Panc1 (cell line): ENCODE measurements at regions of chrX and their contacts with region 1.

Region 1: DNA sequence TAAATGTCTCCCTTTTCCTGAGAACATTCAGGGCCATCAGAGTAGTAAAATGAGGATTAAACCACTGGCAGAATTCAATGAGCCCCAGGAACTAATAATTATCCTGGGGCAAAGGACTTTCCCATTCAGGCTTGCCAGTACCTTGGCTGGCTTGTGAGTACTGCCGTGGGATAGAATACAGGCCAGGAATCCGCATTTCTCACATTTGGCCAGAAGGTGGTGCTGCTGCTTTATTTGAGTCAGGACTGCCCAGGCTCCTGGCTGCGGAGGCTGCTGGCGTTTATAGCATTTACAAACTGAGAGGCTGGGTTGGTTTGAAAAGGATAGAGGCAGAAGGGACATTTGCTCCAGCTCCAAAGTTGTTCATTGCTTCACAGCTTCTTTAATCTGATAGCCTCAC is 91.4 kb downstream of the RTL9 start:
- DNase-seq: peak; percentile 45
- ATAC-seq: peak; percentile 95
- H3K4me3 ChIP-seq: no peak overlapping the region
- H3K27ac ChIP-seq: no peak overlapping the region
- H3K4me1 ChIP-seq: no peaks in the 10 kb centered on the region
- H3K27me3 ChIP-seq: peaks cover 12% of the 10 kb centered on the region
- CTCF ChIP-seq: peak; percentile 81

Region 2: GRCh38 chrX:110241816-110242215 is 208.2 kb before region 1 on chrX:
- CTCF ChIA-PET with region 1: no interaction called
- POLR2A ChIA-PET with region 1: no interaction called
- in situ Hi-C with region 1: no loop called
- intact Hi-C with region 1: no loop called
- DNase-seq: no peak
- ATAC-seq: no peak
- H3K4me3 ChIP-seq: no peak overlapping the region
- H3K27ac ChIP-seq: no peak overlapping the region
- H3K4me1 ChIP-seq: peaks cover 6% of the 10 kb centered on the region
- H3K27me3 ChIP-seq: no peaks in the 10 kb centered on the region
- CTCF ChIP-seq: no peak

Region 3: GRCh38 chrX:110665223-110666002 is 215.4 kb after region 1 on chrX:
- CTCF ChIA-PET with region 1: no interaction called
- POLR2A ChIA-PET with region 1: no interaction called
- in situ Hi-C with region 1: no loop called
- intact Hi-C with region 1: loop called (anchors 5 kb)
- DNase-seq: no peak
- ATAC-seq: peak; percentile 80; the same call in 1 of the 2 replicates
- H3K4me3 ChIP-seq: no peak overlapping the region
- H3K27ac ChIP-seq: no peak overlapping the region
- H3K4me1 ChIP-seq: no peaks in the 10 kb centered on the region
- H3K27me3 ChIP-seq: no peaks in the 10 kb centered on the region
- CTCF ChIP-seq: peak; percentile 64

Region 4: DNA sequence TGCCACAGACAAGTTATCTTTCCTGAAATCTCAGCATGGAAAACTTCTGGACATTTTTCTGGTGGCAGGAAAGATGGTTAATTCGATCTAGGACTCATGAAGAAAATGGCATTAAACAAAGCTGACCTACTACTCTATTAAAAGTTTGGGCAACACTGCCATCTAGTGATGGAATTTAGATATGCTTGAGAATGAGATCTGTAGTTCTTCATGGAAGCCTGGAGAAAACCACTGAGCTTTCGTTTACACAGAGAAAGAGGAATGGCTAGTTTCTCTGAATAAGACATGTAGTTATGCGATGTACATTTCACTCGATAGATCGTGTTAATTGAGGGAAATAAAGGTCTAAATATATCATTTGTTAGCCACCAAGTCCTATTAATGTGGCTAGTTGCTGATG is 397.3 kb after region 1 on chrX:
- CTCF ChIA-PET with region 1: interaction called, 4 read pairs
- POLR2A ChIA-PET with region 1: no interaction called
- in situ Hi-C with region 1: no loop called
- intact Hi-C with region 1: loop called (anchors 1 kb)
- DNase-seq: peak; percentile 28
- ATAC-seq: peak; percentile 89
- H3K4me3 ChIP-seq: no peak overlapping the region
- H3K27ac ChIP-seq: no peak overlapping the region
- H3K4me1 ChIP-seq: no peaks in the 10 kb centered on the region
- H3K27me3 ChIP-seq: 0 out of 2 replicates have a peak, but pooled peaks cover 2% of the 10 kb centered on the region
- CTCF ChIP-seq: peak; percentile 51; the same call in 1 of the 2 replicates